IMR-90 (cell line): ENCODE measurements at regions of chr17 and their contacts with region 1.

Region 1: GRCh38 chr17:7561028-7561575 is 617 bp upstream of the SENP3 start:
- DNase-seq: peak; percentile 76
- ATAC-seq: peak; percentile 72
- H3K4me3 ChIP-seq: peak overlapping the region; percentile 79
- H3K27ac ChIP-seq: peak overlapping the region; percentile 84
- H3K4me1 ChIP-seq: peaks cover 9% of the 10 kb centered on the region
- H3K27me3 ChIP-seq: no peaks in the 10 kb centered on the region
- CTCF ChIP-seq: peak; percentile 94
- POLR2A ChIP-seq: no peak
- RAD21 ChIP-seq: peak; percentile 85

Region 2: GRCh38 chr17:7045909-7046724 is 515.0 kb before region 1 on chr17:
- CTCF ChIA-PET with region 1: no interaction called
- POLR2A ChIA-PET with region 1: no interaction called
- dilution Hi-C with region 1: no loop called
- in situ Hi-C with region 1: no loop called
- intact Hi-C with region 1: loop called (anchors 10 kb)
- DNase-seq: peak; percentile 87
- ATAC-seq: peak; percentile 67
- H3K4me3 ChIP-seq: no peak overlapping the region
- H3K27ac ChIP-seq: no peak overlapping the region
- H3K4me1 ChIP-seq: peaks cover 6% of the 10 kb centered on the region
- H3K27me3 ChIP-seq: peaks cover 32% of the 10 kb centered on the region
- CTCF ChIP-seq: peak; percentile 93
- POLR2A ChIP-seq: no peak
- RAD21 ChIP-seq: peak; percentile 90

Region 3: GRCh38 chr17:7280519-7281429 is 280.3 kb before region 1 on chr17:
- CTCF ChIA-PET with region 1: no interaction called
- POLR2A ChIA-PET with region 1: no interaction called
- dilution Hi-C with region 1: no loop called
- in situ Hi-C with region 1: no loop called
- intact Hi-C with region 1: loop called (anchors 1 kb)
- DNase-seq: peak; percentile 68
- ATAC-seq: peak; percentile 83
- H3K4me3 ChIP-seq: peak overlapping the region; percentile 26; the same call in 1 of the 2 replicates
- H3K27ac ChIP-seq: no peak overlapping the region
- H3K4me1 ChIP-seq: peaks cover 2% of the 10 kb centered on the region; the same call in 1 of the 2 replicates
- H3K27me3 ChIP-seq: peaks cover 24% of the 10 kb centered on the region; the same call in 1 of the 2 replicates
- CTCF ChIP-seq: peak; percentile 96
- POLR2A ChIP-seq: peak; percentile 55
- RAD21 ChIP-seq: peak; percentile 96

Region 4: DNA sequence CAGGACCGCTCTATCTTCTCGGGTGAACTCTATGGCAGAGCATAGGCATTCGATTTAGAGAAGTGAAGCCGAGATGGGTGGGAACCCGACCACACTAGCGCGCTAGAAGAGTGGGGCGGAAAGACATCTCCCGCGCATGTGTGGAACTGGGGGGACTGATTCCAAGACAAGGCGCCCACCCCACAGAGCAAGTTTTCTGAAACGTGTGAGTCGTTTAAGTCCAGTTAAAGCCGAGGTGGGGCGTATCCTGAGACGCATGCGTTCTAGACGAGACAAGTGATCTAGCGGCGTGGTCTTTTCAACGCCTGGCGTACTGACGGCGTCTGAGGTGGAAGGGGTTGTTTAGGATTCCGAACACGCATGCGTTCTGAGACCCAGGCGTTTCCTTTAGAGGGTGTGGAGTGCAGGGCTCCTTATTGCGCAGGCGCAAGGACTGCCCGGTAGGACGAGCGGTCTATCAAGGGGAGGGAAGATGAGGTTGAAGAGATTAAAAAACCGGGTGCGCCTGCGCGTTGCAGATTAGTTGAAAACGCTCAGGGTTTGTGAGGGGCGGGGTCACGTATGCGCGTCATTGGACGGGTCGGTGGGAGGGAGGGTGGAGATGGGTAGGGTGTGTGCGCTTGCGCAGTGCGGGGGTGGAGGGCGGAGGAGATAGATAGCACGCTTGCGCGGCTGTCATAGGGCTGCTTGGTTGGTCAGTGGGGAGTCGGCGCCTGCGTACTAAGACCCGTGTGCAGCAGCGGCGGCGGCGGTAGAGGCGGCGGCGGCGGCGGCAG is 254.0 kb before region 1 on chr17 and contains the start of gene EIF5A:
- CTCF ChIA-PET with region 1: no interaction called
- POLR2A ChIA-PET with region 1: no interaction called
- dilution Hi-C with region 1: no loop called
- in situ Hi-C with region 1: no loop called
- intact Hi-C with region 1: no loop called
- DNase-seq: peak; percentile 100
- ATAC-seq: peak; percentile 86
- H3K4me3 ChIP-seq: peak within 1 kb of the TSS; percentile 68
- H3K27ac ChIP-seq: peak within 1 kb of the TSS; percentile 74
- H3K4me1 ChIP-seq: no peaks in the 10 kb centered on the region; the same call in 1 of the 2 replicates
- H3K27me3 ChIP-seq: no peaks in the 10 kb centered on the region; the same call in 1 of the 2 replicates
- CTCF ChIP-seq: no peak
- POLR2A ChIP-seq: peak; percentile 69; the same call in 1 of the 2 replicates
- RAD21 ChIP-seq: no peak
- total RNA-seq, gene EIF5A: 718 and 883 TPM in 2 replicates

Region 5: GRCh38 chr17:7351665-7352501 is 209.2 kb before region 1 on chr17 and contains the start of gene KCTD11:
- CTCF ChIA-PET with region 1: interaction called, 19 read pairs
- POLR2A ChIA-PET with region 1: no interaction called
- dilution Hi-C with region 1: no loop called
- in situ Hi-C with region 1: loop called (anchors 10 kb)
- intact Hi-C with region 1: loop called (anchors 5 kb)
- DNase-seq: peak; percentile 88
- ATAC-seq: peak; percentile 73
- H3K4me3 ChIP-seq: peak within 1 kb of the TSS; percentile 93
- H3K27ac ChIP-seq: peak within 1 kb of the TSS; percentile 99
- H3K4me1 ChIP-seq: peaks cover 39% of the 10 kb centered on the region
- H3K27me3 ChIP-seq: no peaks in the 10 kb centered on the region
- CTCF ChIP-seq: 0 out of 2 replicates have a peak, but pooled peaks have one; percentile 0
- POLR2A ChIP-seq: peak; percentile 66; the same call in 1 of the 2 replicates
- RAD21 ChIP-seq: no peak; the same call in 1 of the 2 replicates
- total RNA-seq, gene KCTD11: 10.6 and 10.8 TPM in 2 replicates

Region 6: DNA sequence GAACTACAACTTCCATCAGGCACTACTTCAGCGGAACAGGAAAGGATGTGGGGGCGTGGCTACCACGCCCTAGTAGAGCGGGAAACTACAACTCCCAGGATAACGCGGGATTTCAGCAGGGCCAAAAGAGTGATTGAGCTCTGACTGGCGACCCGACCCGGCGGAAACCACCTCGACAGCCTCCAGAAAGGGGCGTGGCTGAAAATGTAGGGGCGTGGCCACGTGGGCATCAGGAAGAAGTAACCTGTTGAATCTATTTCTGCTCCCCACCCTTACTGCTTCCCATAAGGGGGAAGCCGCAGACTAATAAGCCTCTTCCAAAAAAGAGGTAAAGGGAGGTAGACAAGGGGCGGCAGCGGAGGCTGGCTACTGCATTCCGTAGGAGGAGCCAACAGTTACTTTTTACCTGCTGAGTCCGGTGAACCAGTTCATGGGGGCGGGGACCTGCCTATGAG is 125.9 kb before region 1 on chr17 and contains the start of gene TMEM102:
- CTCF ChIA-PET with region 1: interaction called, 12 read pairs
- POLR2A ChIA-PET with region 1: no interaction called
- dilution Hi-C with region 1: no loop called
- in situ Hi-C with region 1: no loop called
- intact Hi-C with region 1: loop called (anchors 1 kb)
- DNase-seq: peak; percentile 94
- ATAC-seq: peak; percentile 77
- H3K4me3 ChIP-seq: peak within 1 kb of the TSS; percentile 33
- H3K27ac ChIP-seq: no peak within 1 kb of the TSS
- H3K4me1 ChIP-seq: peaks cover 2% of the 10 kb centered on the region
- H3K27me3 ChIP-seq: peaks cover 25% of the 10 kb centered on the region
- CTCF ChIP-seq: no peak
- POLR2A ChIP-seq: no peak
- RAD21 ChIP-seq: no peak
- total RNA-seq, gene TMEM102: 1.1 and 1.4 TPM in 2 replicates

Region 7: DNA sequence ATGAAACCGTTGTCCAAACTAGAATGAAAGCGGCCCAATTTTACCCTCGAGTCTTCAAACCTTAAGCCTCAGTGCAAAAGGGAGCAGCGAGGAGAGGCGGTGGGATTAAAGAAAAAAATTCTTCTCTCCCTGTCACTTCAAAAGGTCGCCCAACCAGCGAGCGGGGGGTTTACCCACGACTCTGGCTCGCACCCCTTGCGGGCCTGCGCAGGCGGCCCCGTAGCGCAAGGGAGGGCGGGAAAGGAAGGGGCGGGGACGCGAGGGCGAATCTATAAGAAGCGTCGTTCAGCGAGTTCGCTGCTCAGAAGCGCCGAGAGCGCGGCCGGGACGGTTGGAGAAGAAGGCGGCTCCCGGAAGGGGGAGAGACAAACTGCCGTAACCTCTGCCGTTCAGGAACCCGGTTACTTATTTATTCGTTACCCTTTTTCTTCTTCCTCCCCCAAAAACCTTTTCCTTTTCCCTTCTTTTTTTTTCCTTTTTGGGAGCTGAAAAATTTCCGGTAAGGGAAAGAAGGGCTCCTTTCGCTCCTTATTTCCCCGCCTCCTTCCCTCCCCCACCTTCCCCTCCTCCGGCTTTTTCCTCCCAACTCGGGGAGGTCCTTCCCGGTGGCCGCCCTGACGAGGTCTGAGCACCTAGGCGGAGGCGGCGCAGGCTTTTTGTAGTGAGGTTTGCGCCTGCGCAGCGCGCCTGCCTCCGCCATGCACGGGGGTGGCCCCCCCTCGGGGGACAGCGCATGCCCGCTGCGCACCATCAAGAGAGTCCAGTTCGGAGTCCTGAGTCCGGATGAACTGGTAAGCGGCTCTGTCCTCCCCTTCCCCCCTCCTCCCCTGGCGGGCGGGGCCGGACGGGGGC is 76.8 kb before region 1 on chr17 and contains the start of gene POLR2A:
- CTCF ChIA-PET with region 1: no interaction called
- POLR2A ChIA-PET with region 1: no interaction called
- dilution Hi-C with region 1: no loop called
- in situ Hi-C with region 1: no loop called
- intact Hi-C with region 1: loop called (anchors 1 kb)
- DNase-seq: peak; percentile 98
- ATAC-seq: peak; percentile 72
- H3K4me3 ChIP-seq: peak within 1 kb of the TSS; percentile 73
- H3K27ac ChIP-seq: peak within 1 kb of the TSS; percentile 99
- H3K4me1 ChIP-seq: peaks cover 14% of the 10 kb centered on the region
- H3K27me3 ChIP-seq: no peaks in the 10 kb centered on the region
- CTCF ChIP-seq: no peak
- POLR2A ChIP-seq: peak; percentile 100
- RAD21 ChIP-seq: no peak; the same call in 1 of the 2 replicates
- total RNA-seq, gene POLR2A: 56.4 and 56.6 TPM in 2 replicates

Region 8: GRCh38 chr17:7711051-7711755 is 150.1 kb after region 1 on chr17:
- CTCF ChIA-PET with region 1: no interaction called
- POLR2A ChIA-PET with region 1: no interaction called
- dilution Hi-C with region 1: no loop called
- in situ Hi-C with region 1: no loop called
- intact Hi-C with region 1: no loop called
- DNase-seq: no peak
- ATAC-seq: no peak
- H3K4me3 ChIP-seq: no peak overlapping the region
- H3K27ac ChIP-seq: no peak overlapping the region
- H3K4me1 ChIP-seq: peaks cover under 1% of the 10 kb centered on the region; the same call in 1 of the 2 replicates
- H3K27me3 ChIP-seq: peaks cover 61% of the 10 kb centered on the region
- CTCF ChIP-seq: no peak
- POLR2A ChIP-seq: no peak
- RAD21 ChIP-seq: no peak